MCF 10A (cell line): ENCODE measurements at regions of chr2 and their contacts with region 1.

Region 1: GRCh38 chr2:187055463-187055862 is 206.5 kb upstream of the ZSWIM2 start:
- DNase-seq: peak; percentile 64
- H3K4me3 Mint-ChIP-seq: no peak overlapping the region
- H3K27ac Mint-ChIP-seq: no peak overlapping the region
- H3K4me1 Mint-ChIP-seq: no peaks in the 10 kb centered on the region
- H3K27me3 Mint-ChIP-seq: no peaks in the 10 kb centered on the region
- CTCF ChIP-seq: no peak

Region 2: GRCh38 chr2:187117483-187117882 is 62.0 kb after region 1 on chr2:
- CTCF ChIA-PET with region 1: no interaction called
- POLR2A ChIA-PET with region 1: no interaction called
- intact Hi-C with region 1: loop called (anchors 10 kb)
- DNase-seq: peak; percentile 2
- H3K4me3 Mint-ChIP-seq: no peak overlapping the region
- H3K27ac Mint-ChIP-seq: no peak overlapping the region
- H3K4me1 Mint-ChIP-seq: no peaks in the 10 kb centered on the region
- H3K27me3 Mint-ChIP-seq: no peaks in the 10 kb centered on the region
- CTCF ChIP-seq: no peak